Activated CD8-positive, alpha-beta T cell treated with anti-CD3 and anti-CD28 coated beads for 36 hours (primary cell): ENCODE measurements at regions of chr1 and their contacts with region 1.

Region 1: DNA sequence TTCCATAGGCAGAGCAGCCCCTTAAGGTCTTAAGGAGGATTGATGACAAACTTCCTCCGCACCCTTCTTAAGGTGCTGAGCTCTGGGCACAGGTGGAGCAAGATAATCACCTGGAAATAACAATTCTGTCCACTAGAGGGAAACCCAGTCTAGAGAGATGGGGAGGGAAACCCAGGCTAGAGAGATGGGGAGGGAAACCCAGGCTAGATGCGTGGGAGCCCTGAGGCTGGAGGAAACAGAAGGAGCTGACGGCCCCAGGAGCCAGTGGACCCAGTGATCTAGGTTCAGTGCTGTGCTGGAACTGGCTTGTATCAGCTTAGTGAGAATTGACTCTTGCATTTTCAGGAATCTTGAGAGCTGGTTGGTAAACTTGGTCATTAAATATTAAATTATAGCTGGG is 17.8 kb upstream of the MYCL start:
- DNase-seq: peak; percentile 73
- ATAC-seq: peak; percentile 100
- H3K4me3 Mint-ChIP-seq: no peak overlapping the region
- H3K27ac Mint-ChIP-seq: no peak overlapping the region
- H3K4me1 Mint-ChIP-seq: no peaks in the 10 kb centered on the region
- H3K27me3 Mint-ChIP-seq: no peaks in the 10 kb centered on the region
- CTCF ChIP-seq: peak; percentile 69

Region 2: GRCh38 chr1:39738622-39739366 is 180.8 kb before region 1 on chr1 and contains the start of gene PPIE:
- CTCF ChIA-PET with region 1: no interaction called
- POLR2A ChIA-PET with region 1: no interaction called
- intact Hi-C with region 1: no loop called
- DNase-seq: peak; percentile 99
- ATAC-seq: peak; percentile 99
- H3K4me3 Mint-ChIP-seq: peak within 1 kb of the TSS; percentile 93
- H3K27ac Mint-ChIP-seq: peak within 1 kb of the TSS; percentile 92
- H3K4me1 Mint-ChIP-seq: peaks cover 43% of the 10 kb centered on the region
- H3K27me3 Mint-ChIP-seq: peaks cover 8% of the 10 kb centered on the region
- CTCF ChIP-seq: no peak
- total RNA-seq, gene PPIE: 71.7 to 74.7 TPM

Region 3: GRCh38 chr1:39816415-39817090 is 103.0 kb before region 1 on chr1:
- CTCF ChIA-PET with region 1: interaction called, 11 read pairs
- POLR2A ChIA-PET with region 1: no interaction called
- intact Hi-C with region 1: no loop called
- DNase-seq: peak; percentile 69
- ATAC-seq: peak; percentile 82
- H3K4me3 Mint-ChIP-seq: peak overlapping the region; percentile 39
- H3K27ac Mint-ChIP-seq: no peak overlapping the region
- H3K4me1 Mint-ChIP-seq: peaks cover 14% of the 10 kb centered on the region
- H3K27me3 Mint-ChIP-seq: peaks cover 16% of the 10 kb centered on the region
- CTCF ChIP-seq: peak; percentile 77

Region 4: DNA sequence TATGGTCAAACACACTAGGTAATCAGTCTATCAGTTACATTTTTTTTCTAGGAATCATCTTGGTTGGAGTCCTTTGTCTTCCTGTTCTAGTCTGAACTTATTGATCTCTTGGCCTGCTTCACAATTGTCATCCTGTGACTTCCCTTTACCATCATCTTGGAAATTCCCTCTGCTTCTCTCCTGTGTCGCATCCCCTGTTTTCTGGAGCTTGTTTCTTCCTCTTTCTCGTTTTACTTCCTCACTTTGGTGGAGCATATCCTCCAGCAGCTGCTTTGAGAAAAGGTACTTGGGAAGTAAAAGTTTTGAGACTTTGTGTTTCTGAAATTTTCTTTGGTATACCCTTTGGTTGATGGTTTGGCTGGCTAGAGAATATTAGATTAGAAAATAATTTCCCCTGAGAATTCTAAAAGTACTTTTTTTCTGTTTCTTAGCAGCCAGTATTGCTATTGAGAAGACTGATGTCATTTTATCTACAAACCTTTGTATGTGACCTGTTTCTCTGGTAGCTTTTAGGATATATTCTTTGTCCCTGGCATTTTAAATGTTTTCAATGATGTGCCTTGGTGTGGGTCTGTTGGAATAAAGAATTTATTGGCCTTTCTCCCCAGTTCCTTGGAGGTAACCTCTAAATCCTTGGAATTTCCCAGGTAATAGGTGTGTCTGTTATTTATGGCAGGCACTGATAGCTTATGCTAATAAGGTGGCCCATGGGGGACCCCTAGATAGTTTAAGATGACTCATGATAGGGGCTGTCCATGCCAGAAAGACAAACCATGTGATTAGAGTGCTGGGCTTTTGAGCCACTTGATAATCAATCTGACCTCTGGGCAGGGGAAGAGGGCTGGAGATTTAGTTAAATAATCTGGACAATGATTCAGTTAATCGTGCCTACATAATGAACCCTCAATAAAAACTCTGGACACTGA is 11.8 kb before region 1 on chr1:
- CTCF ChIA-PET with region 1: interaction called, 28 read pairs
- POLR2A ChIA-PET with region 1: interaction called, 5 read pairs
- intact Hi-C with region 1: no loop called
- DNase-seq: no peak
- ATAC-seq: no peak
- H3K4me3 Mint-ChIP-seq: no peak overlapping the region
- H3K27ac Mint-ChIP-seq: no peak overlapping the region
- H3K4me1 Mint-ChIP-seq: peaks cover 2% of the 10 kb centered on the region
- H3K27me3 Mint-ChIP-seq: peaks cover 41% of the 10 kb centered on the region
- CTCF ChIP-seq: no peak

Region 5: DNA sequence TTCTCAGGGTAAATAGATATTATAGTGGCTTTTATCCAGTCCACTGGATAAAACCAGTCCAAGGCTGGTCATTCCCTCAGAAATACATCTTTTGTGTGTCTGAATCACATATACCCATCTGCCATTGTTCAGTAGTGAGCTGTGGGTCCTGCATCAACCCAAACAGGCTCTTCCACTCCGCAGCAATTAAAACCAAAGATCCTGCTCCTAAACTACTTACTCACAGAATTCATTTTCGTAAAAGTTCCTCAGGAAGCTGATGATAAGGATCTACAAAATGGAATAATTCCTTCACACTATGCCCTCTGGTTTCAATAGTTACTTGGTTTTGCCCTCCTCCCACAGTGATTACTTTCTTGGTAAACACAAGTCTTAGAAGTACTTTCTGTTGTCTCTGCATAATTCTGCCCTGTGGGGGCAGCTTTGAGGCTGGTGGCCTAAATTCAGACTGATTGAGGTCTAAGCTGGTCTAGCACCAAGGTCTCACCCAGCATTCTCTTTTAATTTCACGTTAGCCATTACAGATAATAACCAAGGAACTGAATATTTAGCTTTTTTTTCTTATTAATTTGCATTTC is 30.4 kb after region 1 on chr1:
- CTCF ChIA-PET with region 1: interaction called, 18 read pairs
- POLR2A ChIA-PET with region 1: no interaction called
- intact Hi-C with region 1: no loop called
- DNase-seq: no peak
- ATAC-seq: no peak
- H3K4me3 Mint-ChIP-seq: no peak overlapping the region
- H3K27ac Mint-ChIP-seq: no peak overlapping the region
- H3K4me1 Mint-ChIP-seq: peaks cover 13% of the 10 kb centered on the region
- H3K27me3 Mint-ChIP-seq: peaks cover 2% of the 10 kb centered on the region
- CTCF ChIP-seq: no peak

Region 6: GRCh38 chr1:39973503-39974135 is 54.1 kb after region 1 on chr1:
- CTCF ChIA-PET with region 1: interaction called, 293 read pairs
- POLR2A ChIA-PET with region 1: interaction called, 4 read pairs
- intact Hi-C with region 1: loop called (anchors 2 kb)
- DNase-seq: peak; percentile 84
- ATAC-seq: peak; percentile 85
- H3K4me3 Mint-ChIP-seq: no peak overlapping the region
- H3K27ac Mint-ChIP-seq: no peak overlapping the region
- H3K4me1 Mint-ChIP-seq: no peaks in the 10 kb centered on the region
- H3K27me3 Mint-ChIP-seq: no peaks in the 10 kb centered on the region
- CTCF ChIP-seq: peak; percentile 99

Region 7: GRCh38 chr1:40059338-40059959 is 139.9 kb after region 1 on chr1:
- CTCF ChIA-PET with region 1: interaction called, 11 read pairs
- POLR2A ChIA-PET with region 1: no interaction called
- intact Hi-C with region 1: no loop called
- DNase-seq: peak; percentile 57
- ATAC-seq: peak; percentile 72
- H3K4me3 Mint-ChIP-seq: peak overlapping the region; percentile 53
- H3K27ac Mint-ChIP-seq: peak overlapping the region; percentile 91
- H3K4me1 Mint-ChIP-seq: peaks cover 89% of the 10 kb centered on the region
- H3K27me3 Mint-ChIP-seq: no peaks in the 10 kb centered on the region
- CTCF ChIP-seq: peak; percentile 38

Region 8: GRCh38 chr1:40257313-40257687 is 337.8 kb after region 1 on chr1:
- CTCF ChIA-PET with region 1: no interaction called
- POLR2A ChIA-PET with region 1: no interaction called
- intact Hi-C with region 1: no loop called
- DNase-seq: no peak
- ATAC-seq: no peak
- H3K4me3 Mint-ChIP-seq: peak overlapping the region; percentile 94
- H3K27ac Mint-ChIP-seq: peak overlapping the region; percentile 98
- H3K4me1 Mint-ChIP-seq: peaks cover 44% of the 10 kb centered on the region
- H3K27me3 Mint-ChIP-seq: no peaks in the 10 kb centered on the region
- CTCF ChIP-seq: no peak